ENCODE measurements at regions of chr7 and their contacts with region 1.

Region 1: DNA sequence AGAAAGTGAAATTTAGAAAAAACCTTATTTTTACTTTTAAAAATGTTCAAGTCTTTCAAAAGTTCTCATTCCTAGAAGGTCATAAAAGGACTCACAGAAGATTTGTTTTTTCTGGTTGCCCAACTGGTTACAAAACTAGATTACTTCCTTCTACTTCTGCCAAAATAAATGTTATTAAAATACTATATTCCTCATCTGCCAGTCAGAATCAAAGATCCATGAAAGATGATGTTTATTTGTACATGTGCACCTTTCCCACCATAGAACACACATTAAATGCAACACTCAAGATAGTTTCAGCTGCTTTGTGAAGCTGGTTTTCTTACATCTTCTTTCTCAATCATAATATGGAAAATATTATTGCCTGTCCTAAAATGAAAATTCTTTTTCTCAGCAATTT is 465.4 kb downstream of the ETV1 start:
- DNase-seq: no peak

Region 2: GRCh38 chr7:14457568-14458453 is 933.7 kb after region 1 on chr7:
- intact Hi-C with region 1: loop called (anchors 10 kb)
- DNase-seq: no peak

Measured in cardiac septum (tissue), 1 donor.